Ascending aorta (tissue), 2 donors: ENCODE measurements at regions of chr15 and their contacts with region 1.

Region 1: DNA sequence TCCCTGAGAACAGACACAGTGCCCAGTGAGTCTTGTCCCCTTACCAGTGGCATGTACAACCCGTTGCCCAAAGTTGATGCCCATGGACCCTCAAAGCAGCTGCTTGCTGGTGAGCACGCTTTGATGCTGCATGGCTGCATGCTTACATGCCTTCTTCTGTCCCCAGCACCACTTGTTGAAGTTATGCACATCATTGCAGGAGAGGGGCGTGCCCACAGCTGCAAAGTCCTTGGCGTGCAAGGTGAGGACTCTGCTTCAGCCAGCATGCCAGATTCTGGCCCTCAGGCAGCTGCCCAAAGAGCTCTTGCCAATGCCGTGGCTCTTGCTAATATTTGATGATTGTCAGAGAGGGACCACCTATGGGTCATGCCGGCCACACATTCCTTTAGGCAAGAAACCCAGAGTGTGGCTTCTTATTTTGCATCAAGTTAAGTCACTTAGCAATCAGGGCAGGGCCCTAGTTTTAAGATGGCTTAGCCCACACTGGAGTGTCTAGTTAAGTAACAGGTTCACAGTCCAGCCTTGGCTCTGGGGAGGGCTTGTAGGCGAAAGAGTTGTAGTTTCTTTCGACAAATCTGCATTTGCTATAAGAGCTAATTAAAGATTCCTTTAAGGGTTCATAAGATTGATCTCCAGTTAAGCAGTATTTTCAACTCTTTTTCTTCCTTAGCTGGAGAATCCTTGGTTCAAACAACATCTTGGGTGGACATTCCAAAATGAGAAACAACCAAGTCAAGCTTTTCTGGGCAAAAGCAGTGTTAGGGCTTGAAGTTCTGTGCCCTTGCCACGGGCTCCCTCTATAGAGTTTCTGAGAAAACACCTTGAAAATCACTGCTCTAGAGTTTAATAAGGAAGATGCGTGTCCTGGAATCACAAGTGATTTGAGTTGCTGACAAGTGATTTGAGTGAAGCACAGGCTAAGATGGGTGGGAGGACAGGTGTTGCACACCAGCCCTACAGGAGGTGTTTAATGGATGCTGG is 128.6 kb downstream of the SLCO3A1 start:
- DNase-seq: no peak
- H3K4me3 ChIP-seq: no peak overlapping the region
- H3K27ac ChIP-seq: peak overlapping the region; percentile 73 to 79
- H3K4me1 ChIP-seq: peaks cover 11 to 41% of the 10 kb centered on the region in 2 donors
- H3K27me3 ChIP-seq: no peaks in the 10 kb centered on the region
- CTCF ChIP-seq: peak in 2 of 3 experiments; percentile 14 to 36

Region 2: DNA sequence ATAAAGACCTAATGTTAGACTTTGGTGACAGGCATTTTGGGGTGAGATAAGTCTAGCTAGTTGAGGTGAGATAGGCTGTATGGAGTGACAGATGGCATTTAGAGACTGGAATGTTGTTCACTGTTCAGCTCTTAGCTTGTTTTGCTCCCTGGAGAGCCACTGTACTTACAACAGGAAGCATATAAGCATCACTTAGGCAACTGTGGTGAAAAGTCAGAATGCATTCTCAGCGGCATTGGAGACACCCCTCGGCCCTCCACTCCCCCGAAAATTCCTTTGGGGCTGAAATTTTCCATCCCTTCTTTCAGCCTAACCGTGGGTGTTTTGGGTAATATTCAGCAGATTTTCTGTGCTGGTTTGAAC is 55.2 kb before region 1 on chr15:
- intact Hi-C with region 1: loop called (anchors 2 kb)
- DNase-seq: no peak
- H3K4me3 ChIP-seq: peak overlapping the region in 1 of 2 donors; percentile 46
- H3K27ac ChIP-seq: peak overlapping the region; percentile 73 to 74
- H3K4me1 ChIP-seq: peaks cover 10 to 35% of the 10 kb centered on the region in 2 donors
- H3K27me3 ChIP-seq: no peaks in the 10 kb centered on the region
- CTCF ChIP-seq: no peak

Region 3: DNA sequence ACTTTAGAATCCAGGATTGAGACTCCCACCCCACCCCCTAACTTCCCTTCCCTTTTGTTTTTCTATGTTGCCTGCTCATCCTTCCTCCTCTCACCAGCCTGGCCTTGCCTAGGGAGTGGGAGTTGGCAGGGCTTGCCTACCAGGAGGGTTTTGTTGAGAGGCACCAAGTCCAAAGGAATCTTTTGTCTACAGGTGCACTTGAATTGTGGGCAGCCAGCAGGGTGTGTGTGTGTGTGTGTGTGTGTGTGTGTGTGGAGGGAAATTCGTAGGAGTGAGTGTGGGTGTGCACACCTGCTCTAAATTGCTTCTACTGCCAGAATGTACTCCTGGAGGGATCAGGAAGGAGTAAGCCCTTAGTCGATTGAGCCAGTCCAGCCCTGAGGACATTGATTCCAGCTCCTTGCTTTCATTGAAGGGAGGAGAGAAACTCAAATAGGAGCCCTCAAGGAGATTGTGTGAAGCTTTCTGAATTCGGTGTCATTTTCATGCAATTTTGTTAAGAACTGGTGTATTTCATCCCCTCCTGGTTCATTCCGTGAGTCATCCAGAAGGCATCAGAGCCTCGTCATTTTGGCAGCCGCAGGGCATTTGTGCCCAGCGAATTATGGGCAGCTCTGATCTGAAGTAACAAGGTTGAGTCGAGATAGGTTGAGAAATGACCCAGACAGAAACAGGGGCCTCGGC is 16.5 kb before region 1 on chr15:
- intact Hi-C with region 1: loop called (anchors 1 kb)
- DNase-seq: peak; percentile 34 to 91
- H3K4me3 ChIP-seq: no peak overlapping the region
- H3K27ac ChIP-seq: peak overlapping the region; percentile 73 to 80
- H3K4me1 ChIP-seq: peaks cover 11 to 51% of the 10 kb centered on the region in 2 donors
- H3K27me3 ChIP-seq: no peaks in the 10 kb centered on the region
- CTCF ChIP-seq: no peak

Region 4: GRCh38 chr15:92011611-92012367 is 29.7 kb after region 1 on chr15:
- intact Hi-C with region 1: loop called (anchors 2 kb)
- DNase-seq: peak in 1 of 2 donors; percentile 72
- H3K4me3 ChIP-seq: peak overlapping the region; percentile 18 to 49
- H3K27ac ChIP-seq: peak overlapping the region; percentile 74 to 76
- H3K4me1 ChIP-seq: peaks cover 4 to 43% of the 10 kb centered on the region in 2 donors
- H3K27me3 ChIP-seq: no peaks in the 10 kb centered on the region
- CTCF ChIP-seq: no peak

Region 5: DNA sequence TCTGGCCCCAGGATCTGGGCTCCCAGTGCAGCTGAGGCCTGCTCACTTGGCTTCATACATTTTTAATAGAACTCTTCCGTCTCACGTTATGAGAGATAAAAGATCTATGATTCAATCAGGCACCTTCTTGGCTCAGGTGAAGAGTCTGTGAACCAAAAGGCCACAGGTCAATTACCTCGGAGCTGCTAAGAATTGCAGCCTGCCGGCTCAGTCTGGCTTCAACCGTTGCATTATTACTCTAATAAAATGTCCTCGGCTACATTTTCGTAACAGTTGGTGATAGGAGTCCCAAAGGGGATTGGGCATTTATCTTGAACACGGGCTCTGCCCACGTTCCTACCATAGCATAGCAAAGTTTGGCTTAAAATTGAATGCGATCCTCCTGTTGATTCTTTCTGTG is 47.6 kb after region 1 on chr15:
- intact Hi-C with region 1: loop called (anchors 5 kb)
- DNase-seq: no peak
- H3K4me3 ChIP-seq: peak overlapping the region in 1 of 2 donors; percentile 40
- H3K27ac ChIP-seq: peak overlapping the region; percentile 87 to 88
- H3K4me1 ChIP-seq: peaks cover 8 to 41% of the 10 kb centered on the region in 2 donors
- H3K27me3 ChIP-seq: no peaks in the 10 kb centered on the region
- CTCF ChIP-seq: no peak